ENCODE measurements at regions of chr4 and their contacts with region 1.

Region 1: DNA sequence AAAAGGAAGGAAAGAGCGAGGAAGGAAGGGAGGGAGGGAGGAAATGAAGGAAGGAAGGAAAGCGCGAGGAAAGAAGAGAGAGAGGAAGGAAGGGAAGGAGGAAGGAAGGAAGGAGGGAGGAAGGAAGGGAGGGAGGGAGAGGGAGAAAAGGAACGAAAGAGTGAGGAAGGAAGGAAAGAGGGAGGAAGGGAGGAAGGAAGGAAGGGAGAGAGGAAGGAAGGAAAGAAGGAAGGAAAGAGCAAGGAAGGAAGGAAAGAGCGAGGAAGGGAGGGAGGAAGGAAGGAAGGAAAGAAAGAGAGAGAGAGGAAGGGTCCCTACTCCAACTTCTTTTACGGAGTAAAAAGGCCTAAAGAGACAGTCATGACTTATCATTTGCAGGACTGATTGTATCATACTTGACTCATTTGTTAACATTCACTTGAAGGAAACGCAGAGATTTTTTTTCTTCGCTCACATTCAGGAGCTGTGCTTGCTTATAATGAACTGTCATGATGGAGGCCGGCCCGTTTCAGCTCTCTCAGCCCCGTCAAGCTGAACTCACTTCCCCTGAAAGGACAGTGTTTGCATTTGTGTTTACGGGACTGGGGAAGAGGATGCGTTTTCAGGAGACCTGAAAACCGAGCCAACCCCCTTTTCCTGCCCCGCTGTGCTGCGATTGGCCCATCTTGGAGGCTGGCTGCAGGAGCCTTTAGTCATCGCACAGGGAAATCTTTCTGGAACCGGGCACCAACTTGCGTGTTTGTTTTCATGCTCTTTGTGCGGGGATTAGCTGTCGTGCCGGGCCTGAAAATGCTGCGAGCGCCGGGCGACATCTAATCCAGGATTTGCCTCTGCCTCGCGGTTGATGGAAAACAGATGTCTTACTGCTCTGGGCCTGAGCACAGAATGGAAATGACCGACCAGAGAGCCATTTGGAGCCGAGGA is 17.8 kb downstream of the TRIM2 start:
- DNase-seq: no peak
- ATAC-seq: peak; percentile 6; the same call in 2 of the 3 replicates
- H3K4me3 ChIP-seq: peak overlapping the region; percentile 58
- H3K27ac ChIP-seq: no peak overlapping the region
- H3K4me1 ChIP-seq: peaks cover 11% of the 10 kb centered on the region
- H3K27me3 ChIP-seq: peaks cover 0 to 5% of the 10 kb centered on the region in 2 experiments; a peak in 2 of 4 replicates
- CTCF ChIP-seq: no peak
- EP300 ChIP-seq: no peak
- POLR2A ChIP-seq: no peak
- RAD21 ChIP-seq: no peak

Region 2: GRCh38 chr4:153649572-153649991 is 427.5 kb after region 1 on chr4:
- CTCF ChIA-PET with region 1: no interaction called
- POLR2A ChIA-PET with region 1: no interaction called
- RAD21 ChIA-PET with region 1: no interaction called
- SMC1A ChIA-PET with region 1: no interaction called
- in situ Hi-C with region 1: no loop called
- intact Hi-C with region 1: loop called (anchors 5 kb)
- DNase-seq: no peak
- ATAC-seq: peak; percentile 75
- H3K4me3 ChIP-seq: no peak overlapping the region
- H3K27ac ChIP-seq: no peak overlapping the region
- H3K4me1 ChIP-seq: no peaks in the 10 kb centered on the region
- H3K27me3 ChIP-seq: no peaks in the 10 kb centered on the region
- CTCF ChIP-seq: peak; percentile 39 to 50 (median 48); a peak in 5 of 6 replicates
- EP300 ChIP-seq: no peak
- POLR2A ChIP-seq: no peak
- RAD21 ChIP-seq: peak; percentile 62

Measured in GM12878 (cell line).